Pancreas (tissue), 10 donors: ENCODE measurements at regions of chr2 and their contacts with region 1.

Region 1: GRCh38 chr2:101831351-101831865 is 133.9 kb downstream of the MAP4K4 start:
- DNase-seq: peak; percentile 56 to 79 (median 60)
- ATAC-seq: peak; percentile 80 to 95 (median 94)
- H3K4me3 ChIP-seq: no peak overlapping the region
- H3K27ac ChIP-seq: peak overlapping the region in 1 of 4 donors; percentile 44
- H3K4me1 ChIP-seq: peaks cover 0 to 10% (median 7%) of the 10 kb centered on the region in 3 donors
- H3K27me3 ChIP-seq: no peaks in the 10 kb centered on the region
- CTCF ChIP-seq: peak; percentile 41 to 65 (median 56)

Region 2: DNA sequence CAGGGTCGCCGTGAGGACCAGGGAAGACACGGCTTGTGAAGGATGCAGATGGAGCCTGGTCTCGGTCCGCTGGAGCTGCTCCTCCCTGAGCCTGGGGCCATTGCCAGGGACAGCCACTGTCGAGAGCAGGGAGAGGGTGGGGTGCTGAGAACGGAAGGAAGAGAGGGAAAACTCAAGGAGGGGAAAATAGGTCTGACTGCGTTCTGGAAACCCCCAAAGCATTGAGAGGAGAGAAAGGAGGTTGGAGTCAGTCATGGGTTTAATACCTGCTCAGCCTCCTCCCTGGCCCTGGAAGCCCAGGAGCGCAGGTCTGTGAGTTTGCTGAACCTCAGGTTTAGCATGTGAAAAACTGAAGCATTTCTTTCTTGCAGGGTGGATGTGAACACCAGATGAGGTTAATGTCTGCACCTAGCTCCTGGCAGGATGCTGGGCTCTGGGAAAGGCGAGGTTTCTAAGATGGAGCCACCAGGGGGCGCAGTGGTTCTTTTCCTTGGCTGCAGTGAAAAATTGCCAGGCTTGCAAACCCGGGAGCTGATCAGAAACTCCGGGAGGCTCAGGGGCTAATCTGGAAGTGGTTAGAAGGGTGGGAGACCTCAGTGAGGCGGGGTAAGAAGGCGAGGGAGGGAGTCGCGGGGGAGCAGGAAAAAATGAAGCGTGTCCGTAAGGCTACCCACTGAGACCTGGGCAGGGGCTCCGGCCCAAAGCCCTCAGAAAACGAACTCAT is 489.3 kb before region 1 on chr2:
- intact Hi-C with region 1: loop called in 1 of 3 experiments (anchors 10 kb)
- DNase-seq: peak; percentile 45 to 91 (median 76)
- ATAC-seq: peak; percentile 55 to 89 (median 86)
- H3K4me3 ChIP-seq: no peak overlapping the region
- H3K27ac ChIP-seq: no peak overlapping the region
- H3K4me1 ChIP-seq: no peaks in the 10 kb centered on the region
- H3K27me3 ChIP-seq: no peaks in the 10 kb centered on the region
- CTCF ChIP-seq: peak; percentile 63 to 82 (median 74)

Region 3: GRCh38 chr2:102041351-102041750 is 209.9 kb after region 1 on chr2:
- intact Hi-C with region 1: no loop called
- DNase-seq: peak in 1 of 6 donors; percentile 50
- ATAC-seq: peak in 3 of 4 donors; percentile 57 to 83 (median 76)
- H3K4me3 ChIP-seq: no peak overlapping the region
- H3K27ac ChIP-seq: no peak overlapping the region
- H3K4me1 ChIP-seq: no peaks in the 10 kb centered on the region
- H3K27me3 ChIP-seq: no peaks in the 10 kb centered on the region
- CTCF ChIP-seq: no peak